Right ventricle myocardium superior (tissue), 1 donor: ENCODE measurements at regions of chr1 and their contacts with region 1.

Region 1: GRCh38 chr1:67853704-67854103 is 20.4 kb upstream of the GNG12 start:
- DNase-seq: peak; percentile 73
- ATAC-seq: peak; percentile 81

Region 2: DNA sequence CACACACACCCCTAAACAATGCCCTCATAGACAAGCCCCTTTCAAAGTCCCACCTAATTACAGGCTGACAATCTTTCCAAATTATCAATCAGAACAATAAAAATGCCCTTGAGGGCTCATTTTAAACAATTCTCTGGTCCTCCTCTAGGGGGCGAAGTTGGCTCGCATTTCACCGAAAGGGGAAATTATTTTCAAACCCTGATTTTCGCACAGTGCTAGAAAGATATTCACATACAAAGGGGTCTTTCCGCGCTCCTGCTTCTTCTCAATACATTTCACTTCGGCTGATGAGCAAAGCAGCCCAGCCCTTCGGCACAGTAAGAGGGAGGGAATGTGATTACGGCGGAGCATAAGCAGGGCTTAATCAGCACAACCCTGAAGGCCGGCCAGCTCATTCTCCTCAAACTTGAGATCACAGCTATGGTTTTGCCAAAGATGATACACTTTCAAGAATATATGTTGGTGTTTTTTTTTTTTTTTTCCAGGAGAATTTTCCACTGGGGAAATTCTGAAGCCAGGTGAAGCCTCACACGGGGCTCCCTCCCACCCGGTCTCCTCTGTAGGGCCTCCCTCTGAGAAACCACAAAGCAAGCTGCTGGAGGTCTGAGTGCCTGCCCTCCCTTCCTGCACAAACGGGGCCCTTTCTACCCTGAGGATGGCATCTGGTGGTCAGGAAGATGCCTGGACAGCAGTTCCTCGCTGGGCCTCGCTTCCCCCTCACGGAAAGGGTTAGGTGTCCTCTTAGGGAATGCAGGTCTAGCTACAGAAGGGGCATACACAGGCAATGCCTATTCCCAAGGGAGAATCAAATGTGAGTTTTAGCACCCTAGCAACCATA is 87.3 kb before region 1 on chr1:
- intact Hi-C with region 1: loop called (anchors 5 kb)
- DNase-seq: peak; percentile 46
- ATAC-seq: peak; percentile 80

Region 3: GRCh38 chr1:67908250-67908936 is 54.7 kb after region 1 on chr1:
- intact Hi-C with region 1: no loop called
- DNase-seq: no peak
- ATAC-seq: no peak

Region 4: GRCh38 chr1:68010090-68010489 is 156.4 kb after region 1 on chr1:
- intact Hi-C with region 1: loop called (anchors 5 kb)
- DNase-seq: no peak
- ATAC-seq: peak; percentile 74

Region 5: DNA sequence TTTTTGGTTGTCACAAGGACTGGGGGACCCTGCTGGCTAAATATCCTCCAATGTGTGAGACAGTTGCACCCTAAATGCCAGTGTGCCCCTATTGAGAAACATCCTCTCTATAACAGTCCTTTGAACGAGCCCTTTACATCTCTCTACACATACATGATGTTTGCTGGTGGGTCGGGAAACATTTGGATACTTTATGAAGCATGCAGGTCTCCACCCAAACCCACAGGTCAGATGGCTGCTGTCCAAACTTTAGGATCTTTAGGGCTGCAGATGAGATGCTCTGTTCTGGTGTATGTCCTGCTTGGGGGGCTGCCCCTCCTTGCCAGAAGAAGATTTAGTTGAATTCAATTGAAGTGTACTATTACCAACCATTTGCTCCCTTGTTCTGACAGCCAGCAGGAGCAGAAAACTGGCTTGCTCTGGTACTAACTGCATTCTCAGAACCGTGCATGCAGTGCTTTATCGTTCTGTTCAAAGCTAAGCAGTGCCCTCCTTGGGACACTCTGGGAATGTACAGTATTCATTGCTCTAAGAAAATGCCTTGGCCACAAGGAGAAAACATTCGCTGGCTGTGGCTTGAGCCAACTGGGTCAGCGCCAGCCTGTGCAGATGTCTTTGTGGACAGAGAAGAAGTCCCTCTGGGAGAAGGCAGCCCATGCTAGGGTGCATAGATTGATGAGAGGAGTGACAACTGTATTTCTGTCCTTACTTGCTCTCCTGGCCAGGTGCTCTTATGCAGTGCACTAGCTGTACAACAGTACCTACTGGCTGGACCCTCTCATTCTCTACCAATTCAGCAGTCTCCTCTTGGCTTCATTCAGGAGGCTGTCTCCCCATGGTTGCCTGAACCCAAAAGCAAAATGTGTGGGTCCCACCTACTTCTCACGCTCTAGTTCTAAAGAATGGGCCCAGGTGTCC is 258.1 kb after region 1 on chr1:
- intact Hi-C with region 1: loop called (anchors 2 kb)
- DNase-seq: peak; percentile 86
- ATAC-seq: peak; percentile 84

Region 6: DNA sequence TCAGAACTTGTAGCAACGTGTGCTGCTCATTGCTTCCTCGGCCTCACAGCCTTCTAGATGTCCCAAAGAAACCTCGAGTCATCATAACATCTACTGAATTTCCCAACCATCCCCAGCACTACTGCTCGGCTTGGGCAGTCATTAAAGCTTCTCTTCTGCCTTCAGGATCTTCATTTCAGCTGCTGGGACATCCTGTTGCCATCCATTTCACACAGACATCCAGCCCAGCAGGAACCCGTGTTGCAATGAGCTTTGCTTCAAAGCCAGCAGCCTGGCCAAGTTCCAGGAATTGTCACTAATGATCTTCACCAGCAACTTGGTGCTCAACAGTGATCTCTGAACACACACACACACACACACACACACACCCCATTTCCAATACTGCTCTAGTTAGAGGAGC is 360.1 kb after region 1 on chr1:
- intact Hi-C with region 1: no loop called
- DNase-seq: peak; percentile 83
- ATAC-seq: peak; percentile 86

Region 7: GRCh38 chr1:68346188-68346808 is 492.6 kb after region 1 on chr1:
- intact Hi-C with region 1: loop called (anchors 10 kb)
- DNase-seq: no peak
- ATAC-seq: peak; percentile 35